Activated naive CD4-positive, alpha-beta T cell treated with anti-CD3 and anti-CD28 coated beads for 36 hours (primary cell): ENCODE measurements at regions of chr19 and their contacts with region 1.

Region 1: GRCh38 chr19:10928525-10929401 is at the starts of genes TIMM29 and YIPF2:
- DNase-seq: peak; percentile 98
- H3K4me3 Mint-ChIP-seq: peak within 1 kb of the TSS; percentile 94
- H3K27ac Mint-ChIP-seq: peak within 1 kb of the TSS; percentile 67
- H3K4me1 Mint-ChIP-seq: peaks cover 31% of the 10 kb centered on the region
- H3K27me3 Mint-ChIP-seq: no peaks in the 10 kb centered on the region
- total RNA-seq, gene TIMM29: 11.0 to 12.7 TPM
- total RNA-seq, gene YIPF2: 22.7 to 25.4 TPM

Region 2: GRCh38 chr19:10870955-10871603 is 57.7 kb before region 1 on chr19 and contains the start of gene CARM1:
- CTCF ChIA-PET with region 1: interaction called, 6 read pairs
- intact Hi-C with region 1: loop called (anchors 1 kb)
- DNase-seq: peak; percentile 99
- H3K4me3 Mint-ChIP-seq: peak within 1 kb of the TSS; percentile 85
- H3K27ac Mint-ChIP-seq: peak within 1 kb of the TSS; percentile 93
- H3K4me1 Mint-ChIP-seq: peaks cover 31% of the 10 kb centered on the region
- H3K27me3 Mint-ChIP-seq: no peaks in the 10 kb centered on the region
- total RNA-seq, gene CARM1: 88.4 to 89.3 TPM